ENCODE measurements at regions of chr4 and their contacts with region 1.

Region 1: GRCh38 chr4:155667568-155668511 is 1.2 kb downstream of the GUCY1A1 start:
- DNase-seq: no peak
- H3K4me3 Mint-ChIP-seq: peak overlapping the region; percentile 90
- H3K27ac Mint-ChIP-seq: no peak overlapping the region
- H3K4me1 Mint-ChIP-seq: peaks cover 20% of the 10 kb centered on the region
- H3K27me3 Mint-ChIP-seq: peaks cover 68% of the 10 kb centered on the region

Region 2: GRCh38 chr4:154082760-154083535 is 1584.9 kb before region 1 on chr4:
- intact Hi-C with region 1: no loop called
- DNase-seq: no peak
- H3K4me3 Mint-ChIP-seq: no peak overlapping the region
- H3K27ac Mint-ChIP-seq: no peak overlapping the region
- H3K4me1 Mint-ChIP-seq: no peaks in the 10 kb centered on the region
- H3K27me3 Mint-ChIP-seq: no peaks in the 10 kb centered on the region

Region 3: GRCh38 chr4:154760895-154761294 is 906.9 kb before region 1 on chr4:
- intact Hi-C with region 1: no loop called
- DNase-seq: no peak
- H3K4me3 Mint-ChIP-seq: no peak overlapping the region
- H3K27ac Mint-ChIP-seq: no peak overlapping the region
- H3K4me1 Mint-ChIP-seq: no peaks in the 10 kb centered on the region
- H3K27me3 Mint-ChIP-seq: peaks cover 4% of the 10 kb centered on the region

Region 4: GRCh38 chr4:155529272-155529671 is 138.6 kb before region 1 on chr4:
- intact Hi-C with region 1: loop called (anchors 5 kb)
- DNase-seq: no peak
- H3K4me3 Mint-ChIP-seq: no peak overlapping the region
- H3K27ac Mint-ChIP-seq: no peak overlapping the region
- H3K4me1 Mint-ChIP-seq: no peaks in the 10 kb centered on the region
- H3K27me3 Mint-ChIP-seq: no peaks in the 10 kb centered on the region

Region 5: GRCh38 chr4:155705664-155706063 is 37.8 kb after region 1 on chr4:
- intact Hi-C with region 1: no loop called
- DNase-seq: no peak
- H3K4me3 Mint-ChIP-seq: no peak overlapping the region
- H3K27ac Mint-ChIP-seq: no peak overlapping the region
- H3K4me1 Mint-ChIP-seq: no peaks in the 10 kb centered on the region
- H3K27me3 Mint-ChIP-seq: no peaks in the 10 kb centered on the region